ENCODE measurements at regions of chr18 and their contacts with region 1.

Region 1: DNA sequence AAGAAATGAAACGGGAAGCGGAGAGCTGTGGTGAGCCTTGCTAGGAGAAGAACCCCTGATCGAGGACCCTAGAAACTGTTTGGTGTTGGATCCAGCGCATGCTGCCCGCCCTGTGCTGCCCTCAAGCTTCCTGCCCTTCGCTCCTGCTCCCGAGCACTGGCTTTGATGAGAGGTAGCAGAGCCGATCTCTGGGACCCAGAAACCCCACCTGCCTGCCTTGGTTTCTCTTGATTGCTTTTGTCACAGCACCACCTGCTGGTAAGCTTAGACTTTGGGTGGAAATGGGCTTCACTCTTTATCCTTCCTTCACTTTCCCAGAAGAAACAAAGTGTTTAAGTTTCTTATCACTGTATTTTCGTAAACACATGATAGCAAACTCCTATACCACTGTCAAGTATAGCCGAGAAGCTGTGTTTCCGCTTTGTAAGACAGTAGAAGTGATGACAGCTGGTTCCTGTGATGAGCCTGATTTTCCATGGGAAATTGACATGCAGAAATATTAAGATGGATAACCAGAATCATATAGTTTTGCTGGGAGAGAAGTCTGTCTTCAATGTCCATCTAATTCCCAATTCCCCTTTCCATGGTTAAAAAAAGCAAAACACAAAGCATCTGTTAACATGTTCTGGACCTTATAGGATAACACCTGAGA is 267.4 kb downstream of the PHLPP1 start:
- DNase-seq: peak; percentile 63 to 71
- H3K4me3 ChIP-seq: no peak overlapping the region
- H3K27ac ChIP-seq: no peak overlapping the region
- H3K4me1 ChIP-seq: peaks cover 4 to 5% of the 10 kb centered on the region in 2 donors
- H3K27me3 ChIP-seq: no peaks in the 10 kb centered on the region
- CTCF ChIP-seq: peak; percentile 31 to 90 (median 74)
- POLR2A ChIP-seq: no peak

Region 2: GRCh38 chr18:62584241-62585120 is 398.2 kb before region 1 on chr18:
- intact Hi-C with region 1: loop called (anchors 2 kb)
- DNase-seq: peak; percentile 85 to 90
- H3K4me3 ChIP-seq: no peak overlapping the region
- H3K27ac ChIP-seq: peak overlapping the region in 1 of 3 donors; percentile 5
- H3K4me1 ChIP-seq: peaks cover 4 to 16% of the 10 kb centered on the region in 2 donors
- H3K27me3 ChIP-seq: no peaks in the 10 kb centered on the region
- CTCF ChIP-seq: peak; percentile 92 to 100 (median 98)
- POLR2A ChIP-seq: no peak

Region 3: DNA sequence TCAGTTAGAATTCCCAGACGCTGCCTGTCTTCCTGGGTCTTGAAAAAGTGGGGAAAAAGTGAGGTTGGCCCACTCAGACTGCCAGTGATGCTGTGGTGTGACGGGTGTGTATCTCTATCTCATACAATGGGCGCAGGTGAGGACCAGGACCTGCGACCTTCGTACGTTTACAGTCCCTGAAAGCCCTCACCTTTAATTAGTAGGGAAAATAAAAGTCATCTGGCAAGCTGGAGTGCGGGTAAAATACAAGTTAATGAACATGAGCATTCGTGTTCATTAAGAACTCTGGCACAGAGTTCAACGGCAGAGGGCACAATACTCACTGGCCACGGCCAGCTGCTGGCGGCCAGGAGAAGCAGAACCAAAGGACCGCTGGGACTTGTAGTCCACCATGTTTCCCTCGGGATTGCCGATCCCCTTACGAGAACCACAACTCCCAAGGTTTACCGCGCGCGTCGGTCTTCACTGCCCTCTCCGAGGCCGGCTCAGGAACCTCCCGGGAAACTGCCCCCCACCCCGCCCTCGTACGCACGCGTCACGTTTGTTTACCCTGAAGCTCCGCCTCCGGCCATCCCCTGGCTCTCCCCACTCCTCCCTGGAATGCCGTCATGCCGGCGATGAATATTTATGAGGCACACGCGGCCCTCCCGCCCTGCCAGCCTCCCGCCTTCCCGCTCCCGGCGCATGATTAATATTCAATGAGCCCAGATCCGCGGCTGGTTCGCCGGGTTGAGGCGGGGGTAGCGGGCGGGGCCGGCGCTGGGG is 267.9 kb before region 1 on chr18:
- intact Hi-C with region 1: loop called (anchors 5 kb)
- DNase-seq: peak; percentile 99 to 100
- H3K4me3 ChIP-seq: peak overlapping the region in 1 of 3 donors; percentile 44
- H3K27ac ChIP-seq: peak overlapping the region; percentile 91 to 94 (median 94)
- H3K4me1 ChIP-seq: peaks cover 4 to 13% of the 10 kb centered on the region in 2 donors
- H3K27me3 ChIP-seq: no peaks in the 10 kb centered on the region
- CTCF ChIP-seq: peak; percentile 33 to 94 (median 78)
- POLR2A ChIP-seq: no peak